ENCODE measurements at regions of chrX and their contacts with region 1.

Region 1: GRCh38 chrX:13638826-13639225 is 14.1 kb upstream of the TCEANC start:
- DNase-seq: no peak
- H3K4me3 ChIP-seq: no peak overlapping the region
- H3K27ac ChIP-seq: no peak overlapping the region
- H3K4me1 ChIP-seq: no peaks in the 10 kb centered on the region
- H3K27me3 ChIP-seq: no peaks in the 10 kb centered on the region
- CTCF ChIP-seq: no peak

Region 2: GRCh38 chrX:13511944-13512330 is 126.9 kb before region 1 on chrX:
- intact Hi-C with region 1: loop called (anchors 5 kb)
- DNase-seq: no peak
- H3K4me3 ChIP-seq: no peak overlapping the region
- H3K27ac ChIP-seq: no peak overlapping the region
- H3K4me1 ChIP-seq: no peaks in the 10 kb centered on the region
- H3K27me3 ChIP-seq: no peaks in the 10 kb centered on the region
- CTCF ChIP-seq: no peak

Region 3: DNA sequence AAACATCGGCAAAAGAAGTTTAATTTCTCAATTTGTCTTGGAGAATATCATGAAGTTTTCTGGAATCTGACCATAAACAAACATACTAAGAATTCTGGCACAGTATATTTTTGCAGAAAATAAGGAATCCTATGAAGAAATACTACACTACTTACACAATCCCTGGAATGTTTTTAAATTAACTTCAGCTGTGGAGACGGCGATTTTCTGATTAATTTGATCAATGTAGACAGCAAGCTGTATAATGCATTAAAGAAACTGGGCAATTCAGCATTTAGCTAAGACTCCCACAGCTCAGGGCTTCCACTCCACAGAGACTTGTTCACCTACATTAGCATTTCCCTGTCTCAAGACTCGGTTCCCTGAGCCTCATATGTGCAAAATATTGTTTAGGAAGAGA is 57.3 kb before region 1 on chrX:
- intact Hi-C with region 1: no loop called
- DNase-seq: no peak
- H3K4me3 ChIP-seq: no peak overlapping the region
- H3K27ac ChIP-seq: no peak overlapping the region
- H3K4me1 ChIP-seq: no peaks in the 10 kb centered on the region
- H3K27me3 ChIP-seq: no peaks in the 10 kb centered on the region
- CTCF ChIP-seq: no peak